ENCODE measurements at regions of chr3 and their contacts with region 1.

Region 1: DNA sequence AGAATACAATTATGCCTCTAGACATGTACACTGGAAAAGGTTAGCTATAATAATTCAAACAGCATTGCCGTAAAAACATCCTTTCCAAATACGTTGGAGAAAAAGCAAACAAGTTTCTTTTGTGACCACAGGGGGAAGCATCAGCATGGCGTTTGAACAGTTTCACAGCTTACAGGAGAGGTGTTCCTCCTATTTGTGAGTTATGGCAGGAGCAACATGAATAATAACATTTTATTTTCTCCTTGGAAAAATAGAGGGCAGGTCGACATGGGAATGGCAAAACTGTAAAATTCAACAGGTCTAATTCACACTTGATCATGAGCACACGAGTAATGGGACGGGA is 39.7 kb upstream of the GADL1 start:
- DNase-seq: peak; percentile 63
- H3K4me3 ChIP-seq: no peak overlapping the region
- H3K27ac ChIP-seq: no peak overlapping the region
- H3K4me1 ChIP-seq: peaks cover 15% of the 10 kb centered on the region
- CTCF ChIP-seq: peak; percentile 78

Region 2: DNA sequence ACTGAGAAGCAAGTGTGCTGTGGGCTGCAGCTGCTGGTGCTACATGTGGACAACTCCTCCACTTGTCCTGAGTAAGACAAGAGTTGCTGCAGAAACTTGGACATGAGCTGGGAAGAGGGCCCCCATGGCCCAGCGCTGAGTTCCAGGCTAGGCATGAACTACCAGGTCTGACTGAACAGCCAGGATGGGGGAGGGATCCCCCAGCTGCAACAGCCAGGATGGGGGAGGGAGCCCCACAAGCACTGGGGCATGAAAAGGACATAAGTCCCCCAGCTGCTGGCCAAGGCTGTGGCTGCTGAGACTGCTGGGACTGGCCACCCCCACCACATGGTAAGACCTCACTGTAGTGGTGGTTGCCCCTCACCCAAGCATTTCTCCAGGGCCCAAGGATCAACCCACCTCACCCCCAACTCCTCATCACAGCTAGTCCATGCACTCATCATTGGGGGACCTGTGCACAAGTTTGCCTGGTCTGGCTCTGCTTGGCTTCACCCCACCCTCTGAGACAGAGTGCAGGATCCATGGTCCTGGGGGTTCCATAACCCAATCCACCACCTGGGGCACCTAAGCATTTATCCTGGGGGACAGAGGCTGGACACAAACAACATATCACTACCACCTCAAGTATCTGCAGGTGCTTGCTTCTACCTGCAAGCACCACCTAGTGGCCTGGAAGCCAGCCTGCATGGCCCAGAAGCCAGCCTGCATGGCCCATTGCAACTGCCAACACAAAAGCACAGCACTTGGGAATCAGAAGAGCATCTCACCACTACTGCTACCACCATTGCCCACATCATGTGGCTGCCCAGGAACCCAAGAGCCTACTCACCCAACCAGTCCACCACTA is 514.1 kb after region 1 on chr3:
- CTCF ChIA-PET with region 1: no interaction called
- POLR2A ChIA-PET with region 1: no interaction called
- intact Hi-C with region 1: loop called (anchors 2 kb)
- DNase-seq: peak; percentile 68
- H3K4me3 ChIP-seq: no peak overlapping the region
- H3K27ac ChIP-seq: no peak overlapping the region
- H3K4me1 ChIP-seq: peaks cover 48% of the 10 kb centered on the region
- CTCF ChIP-seq: peak; percentile 89

Measured in OCI-LY7 (cell line).